Endothelial cell of umbilical vein (primary cell): ENCODE measurements at regions of chr7 and their contacts with region 1.

Region 1: DNA sequence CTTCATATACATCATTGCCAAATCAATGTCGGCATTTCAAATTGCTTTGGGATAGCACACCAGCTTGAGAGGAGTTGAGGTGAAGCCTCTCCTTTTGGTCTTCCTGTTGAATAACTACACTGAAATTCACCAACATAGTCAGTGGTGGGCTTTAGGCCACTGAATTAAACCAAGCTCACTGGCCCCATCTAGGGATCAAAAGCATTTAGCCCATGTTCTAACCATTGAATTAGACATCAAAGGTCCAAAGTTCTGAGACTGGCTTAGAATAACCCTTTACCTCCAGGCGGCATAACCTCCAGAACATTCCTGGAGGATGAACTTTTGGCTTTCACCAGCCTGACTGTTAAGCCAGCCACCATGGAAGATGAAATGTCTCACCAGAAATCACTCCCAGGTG is 54.6 kb downstream of the BPGM start:
- DNase-seq: peak; percentile 55
- H3K4me3 ChIP-seq: no peak overlapping the region
- H3K27ac ChIP-seq: no peak overlapping the region
- H3K4me1 ChIP-seq: peaks cover 13% of the 10 kb centered on the region
- H3K27me3 ChIP-seq: no peaks in the 10 kb centered on the region
- CTCF ChIP-seq: peak; percentile 54 to 55
- POLR2A ChIP-seq: no peak

Region 2: DNA sequence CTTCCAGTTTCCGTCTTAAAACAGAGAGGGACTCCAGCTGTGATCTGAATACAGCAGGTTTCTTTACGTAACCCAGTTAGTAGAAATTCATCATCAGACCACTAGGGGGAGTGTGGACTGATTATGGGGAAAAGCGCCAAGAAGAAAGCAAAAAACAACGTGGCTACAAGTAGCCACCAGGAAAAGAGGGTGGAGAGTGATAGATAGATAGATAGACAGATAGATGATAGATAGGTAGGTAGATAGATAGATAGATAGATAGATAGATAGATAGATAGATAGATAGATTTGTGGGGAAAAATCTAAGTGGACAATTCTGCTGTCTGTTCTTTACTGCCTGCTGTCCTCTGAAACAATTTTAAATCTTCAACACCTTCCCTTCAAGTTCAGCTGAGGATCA is 186.6 kb before region 1 on chr7:
- CTCF ChIA-PET with region 1: interaction called, 4 read pairs
- POLR2A ChIA-PET with region 1: no interaction called
- dilution Hi-C with region 1: no loop called
- intact Hi-C with region 1: loop called (anchors 2 kb)
- DNase-seq: peak; percentile 85
- H3K4me3 ChIP-seq: no peak overlapping the region
- H3K27ac ChIP-seq: no peak overlapping the region
- H3K4me1 ChIP-seq: peaks cover 13% of the 10 kb centered on the region
- H3K27me3 ChIP-seq: no peaks in the 10 kb centered on the region
- CTCF ChIP-seq: peak; percentile 66 to 72
- POLR2A ChIP-seq: no peak

Region 3: DNA sequence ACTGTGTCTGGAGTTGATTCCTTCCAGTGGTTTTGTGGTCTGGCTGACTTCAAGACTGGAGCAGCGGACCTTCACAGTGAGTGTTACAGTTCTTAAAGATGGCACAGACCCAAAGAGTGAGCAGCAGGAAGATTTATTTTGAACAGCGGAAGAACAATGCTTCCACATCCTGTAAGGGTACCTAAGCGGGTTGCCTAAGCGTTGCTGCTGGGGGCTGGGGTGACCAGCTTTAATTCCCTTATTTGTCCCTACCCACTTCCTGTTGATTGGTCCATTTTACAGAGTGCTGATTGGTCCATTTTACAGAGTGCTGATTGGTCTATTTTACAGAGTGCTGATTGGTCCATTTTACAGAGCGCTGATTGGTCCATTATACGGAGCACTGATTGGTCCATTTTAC is 139.1 kb before region 1 on chr7:
- CTCF ChIA-PET with region 1: no interaction called
- POLR2A ChIA-PET with region 1: no interaction called
- dilution Hi-C with region 1: no loop called
- intact Hi-C with region 1: no loop called
- DNase-seq: no peak
- H3K4me3 ChIP-seq: no peak overlapping the region
- H3K27ac ChIP-seq: no peak overlapping the region
- H3K4me1 ChIP-seq: no peaks in the 10 kb centered on the region
- H3K27me3 ChIP-seq: peaks cover 2 to 3% of the 10 kb centered on the region in 2 experiments
- CTCF ChIP-seq: no peak
- POLR2A ChIP-seq: no peak

Region 4: GRCh38 chr7:134613623-134614347 is 87.5 kb before region 1 on chr7:
- CTCF ChIA-PET with region 1: interaction called, 28 read pairs
- POLR2A ChIA-PET with region 1: no interaction called
- dilution Hi-C with region 1: no loop called
- intact Hi-C with region 1: loop called (anchors 1 kb)
- DNase-seq: peak; percentile 99
- H3K4me3 ChIP-seq: peak overlapping the region in 1 of 3 experiments; percentile 3
- H3K27ac ChIP-seq: peak overlapping the region; percentile 85
- H3K4me1 ChIP-seq: peaks cover 28% of the 10 kb centered on the region
- H3K27me3 ChIP-seq: no peaks in the 10 kb centered on the region
- CTCF ChIP-seq: no peak
- POLR2A ChIP-seq: peak; percentile 64

Region 5: GRCh38 chr7:134646425-134647305 is 54.6 kb before region 1 on chr7 and contains the start of gene BPGM:
- CTCF ChIA-PET with region 1: interaction called, 34 read pairs
- POLR2A ChIA-PET with region 1: interaction called, 3 read pairs
- dilution Hi-C with region 1: no loop called
- intact Hi-C with region 1: no loop called
- DNase-seq: peak; percentile 100
- H3K4me3 ChIP-seq: peak within 1 kb of the TSS; percentile 78 to 99 (median 97)
- H3K27ac ChIP-seq: peak within 1 kb of the TSS; percentile 81
- H3K4me1 ChIP-seq: peaks cover 11% of the 10 kb centered on the region
- H3K27me3 ChIP-seq: no peaks in the 10 kb centered on the region
- CTCF ChIP-seq: peak in 1 of 2 donors; percentile 36
- POLR2A ChIP-seq: peak; percentile 95
- total RNA-seq, gene BPGM: 28.3 and 44.4 TPM in 2 replicates

Region 6: DNA sequence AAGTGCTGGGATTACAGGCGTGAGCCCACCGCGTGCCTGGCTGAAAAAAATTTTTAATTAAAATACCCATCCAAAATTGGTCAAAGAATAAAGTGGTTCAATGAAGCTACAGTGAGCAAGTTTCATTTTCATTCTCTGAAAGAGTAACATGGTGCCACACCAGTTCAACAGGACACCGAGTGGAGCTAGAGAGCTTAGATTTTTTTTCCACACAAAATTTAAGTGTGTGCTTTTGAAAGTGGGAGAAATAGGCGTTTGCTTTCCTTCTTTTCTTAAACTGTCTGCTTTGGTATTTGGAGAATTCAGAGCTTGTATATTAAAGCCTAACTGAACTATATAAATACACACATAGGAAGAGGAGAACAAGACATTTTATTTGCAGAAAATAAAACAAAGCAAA is 11.3 kb before region 1 on chr7:
- CTCF ChIA-PET with region 1: interaction called, 47 read pairs
- POLR2A ChIA-PET with region 1: no interaction called
- dilution Hi-C with region 1: no loop called
- intact Hi-C with region 1: no loop called
- DNase-seq: peak; percentile 56
- H3K4me3 ChIP-seq: no peak overlapping the region
- H3K27ac ChIP-seq: no peak overlapping the region
- H3K4me1 ChIP-seq: no peaks in the 10 kb centered on the region
- H3K27me3 ChIP-seq: peaks cover 0 to 3% of the 10 kb centered on the region in 2 experiments
- CTCF ChIP-seq: peak in 1 of 2 donors; percentile 39
- POLR2A ChIP-seq: no peak

Region 7: GRCh38 chr7:134755401-134756022 is 54.2 kb after region 1 on chr7:
- CTCF ChIA-PET with region 1: interaction called, 11 read pairs
- POLR2A ChIA-PET with region 1: no interaction called
- dilution Hi-C with region 1: no loop called
- intact Hi-C with region 1: no loop called
- DNase-seq: peak; percentile 54
- H3K4me3 ChIP-seq: no peak overlapping the region
- H3K27ac ChIP-seq: no peak overlapping the region
- H3K4me1 ChIP-seq: no peaks in the 10 kb centered on the region
- H3K27me3 ChIP-seq: no peaks in the 10 kb centered on the region
- CTCF ChIP-seq: peak; percentile 48 to 60
- POLR2A ChIP-seq: no peak

Region 8: DNA sequence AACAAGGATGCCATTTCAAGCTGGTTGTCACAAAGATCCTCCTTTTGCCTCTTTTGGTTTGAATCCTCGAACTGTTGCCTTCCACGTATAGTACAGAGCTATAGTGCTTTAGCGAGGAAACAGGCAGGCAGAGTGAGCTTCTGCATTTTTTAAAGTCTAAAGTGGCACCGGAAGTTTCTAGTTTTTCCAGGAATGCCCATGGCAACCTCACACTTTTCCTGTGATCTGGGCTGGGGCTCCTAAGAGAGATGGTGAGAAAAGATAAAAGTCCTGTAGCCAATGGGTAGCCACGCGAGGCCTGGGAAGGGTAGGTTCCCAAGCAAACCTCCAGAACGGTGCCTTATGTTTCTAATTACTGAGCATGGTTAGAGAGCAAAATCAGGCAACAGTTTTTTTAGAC is 154.8 kb after region 1 on chr7:
- CTCF ChIA-PET with region 1: no interaction called
- POLR2A ChIA-PET with region 1: no interaction called
- dilution Hi-C with region 1: no loop called
- intact Hi-C with region 1: no loop called
- DNase-seq: peak; percentile 66
- H3K4me3 ChIP-seq: peak overlapping the region in 1 of 3 experiments; percentile 14
- H3K27ac ChIP-seq: peak overlapping the region; percentile 62
- H3K4me1 ChIP-seq: peaks cover 26% of the 10 kb centered on the region
- H3K27me3 ChIP-seq: no peaks in the 10 kb centered on the region
- CTCF ChIP-seq: no peak
- POLR2A ChIP-seq: no peak